ENCODE measurements at regions of chr12 and their contacts with region 1.

Region 1: GRCh38 chr12:108861878-108862587 is 4.7 kb upstream of the SSH1 start:
- DNase-seq: no peak
- H3K4me3 ChIP-seq: no peak overlapping the region
- H3K27ac ChIP-seq: peak overlapping the region in 1 of 4 donors; percentile 33
- H3K4me1 ChIP-seq: peaks cover 6 to 31% (median 10%) of the 10 kb centered on the region in 3 donors
- H3K27me3 ChIP-seq: no peaks in the 10 kb centered on the region
- CTCF ChIP-seq: no peak
- POLR2A ChIP-seq: no peak

Region 2: DNA sequence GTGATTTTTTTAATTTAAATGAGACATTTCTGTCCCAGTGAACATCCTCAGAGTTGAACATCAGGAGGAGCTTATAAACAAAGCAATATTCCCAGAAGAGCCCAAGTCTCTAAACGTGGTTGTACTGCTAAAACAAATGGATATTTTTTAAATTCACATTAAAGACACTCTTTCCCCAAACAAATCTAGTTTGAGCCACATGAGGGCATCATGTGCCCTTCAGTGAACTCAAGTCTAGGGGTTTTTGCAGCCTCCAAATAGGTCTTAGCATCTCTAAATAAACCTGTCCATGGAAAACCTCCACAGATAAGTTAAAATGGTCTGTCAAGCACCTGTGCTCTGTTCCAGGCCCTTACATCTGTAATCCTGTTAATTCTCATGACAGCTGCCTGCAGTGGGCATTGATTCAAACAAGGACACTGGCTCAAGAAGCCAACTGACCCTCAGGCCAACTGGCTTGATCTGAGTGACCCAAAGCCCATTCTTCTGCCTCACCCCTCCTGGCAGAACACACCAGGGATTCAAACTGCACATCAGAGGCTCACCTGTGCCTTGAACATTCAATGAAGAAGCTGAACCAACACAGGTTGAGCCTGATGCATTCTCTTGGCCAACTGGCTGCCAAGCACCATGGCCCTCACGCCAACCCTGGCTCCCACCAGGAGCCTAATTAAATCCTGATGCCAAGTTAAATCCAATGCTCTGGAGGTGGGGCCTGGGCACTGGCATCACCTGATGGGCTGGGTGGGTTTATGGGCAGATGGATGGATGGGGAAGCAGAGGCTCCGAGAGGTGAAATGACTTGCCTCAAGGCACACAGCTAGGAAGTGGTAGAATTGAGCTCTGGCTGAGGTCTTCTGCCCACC is 291.1 kb before region 1 on chr12:
- intact Hi-C with region 1: loop called (anchors 10 kb)
- DNase-seq: no peak
- H3K4me3 ChIP-seq: no peak overlapping the region
- H3K27ac ChIP-seq: no peak overlapping the region
- H3K4me1 ChIP-seq: peaks cover 1 to 21% (median 2%) of the 10 kb centered on the region in 3 donors
- H3K27me3 ChIP-seq: no peaks in the 10 kb centered on the region
- CTCF ChIP-seq: no peak
- POLR2A ChIP-seq: no peak